KBM-7 (cell line): ENCODE measurements at regions of chr11 and their contacts with region 1.

Region 1: DNA sequence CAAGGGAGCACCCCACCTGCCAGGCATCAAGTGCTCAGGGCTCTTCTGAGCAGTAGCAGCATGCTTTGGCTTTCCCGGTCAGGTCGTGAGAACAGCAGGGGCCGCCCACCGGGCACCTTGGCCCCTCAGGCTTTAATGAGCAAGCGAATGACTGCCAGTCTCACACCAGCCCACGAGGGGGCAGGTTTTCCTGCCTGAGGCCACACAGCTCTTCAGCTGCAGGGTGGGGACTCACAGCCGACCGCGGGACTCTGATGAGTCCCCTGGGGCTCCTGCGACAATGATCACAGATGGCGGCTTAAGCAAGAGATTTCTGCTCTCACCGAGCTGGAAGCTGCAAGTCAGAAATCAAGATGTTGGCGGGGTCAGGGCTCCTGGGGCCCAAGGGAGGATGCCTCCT is 14.3 kb upstream of the FGF19 start:
- DNase-seq: peak; percentile 35

Region 2: DNA sequence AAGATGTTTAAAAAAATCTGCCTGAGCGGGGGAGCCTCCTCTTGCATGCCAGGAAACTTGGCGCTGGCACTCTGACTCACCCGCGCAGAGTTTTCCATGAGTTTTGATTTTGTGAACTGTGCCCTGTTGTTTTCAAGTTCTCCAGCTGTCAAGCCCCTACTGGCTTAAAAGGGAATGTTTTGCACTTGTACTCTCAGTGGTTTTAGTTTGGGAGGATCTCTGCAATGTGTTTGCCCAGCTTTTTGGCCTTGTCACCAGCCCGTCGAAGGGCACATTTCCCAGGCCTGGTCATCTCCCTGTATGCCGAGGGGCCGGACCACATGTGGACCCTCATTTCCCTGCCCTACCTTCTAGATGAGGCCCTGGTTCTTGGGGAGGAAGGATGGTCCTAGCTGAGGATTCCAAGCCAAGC is 717.3 kb before region 1 on chr11:
- in situ Hi-C with region 1: no loop called
- DNase-seq: peak; percentile 6

Region 3: DNA sequence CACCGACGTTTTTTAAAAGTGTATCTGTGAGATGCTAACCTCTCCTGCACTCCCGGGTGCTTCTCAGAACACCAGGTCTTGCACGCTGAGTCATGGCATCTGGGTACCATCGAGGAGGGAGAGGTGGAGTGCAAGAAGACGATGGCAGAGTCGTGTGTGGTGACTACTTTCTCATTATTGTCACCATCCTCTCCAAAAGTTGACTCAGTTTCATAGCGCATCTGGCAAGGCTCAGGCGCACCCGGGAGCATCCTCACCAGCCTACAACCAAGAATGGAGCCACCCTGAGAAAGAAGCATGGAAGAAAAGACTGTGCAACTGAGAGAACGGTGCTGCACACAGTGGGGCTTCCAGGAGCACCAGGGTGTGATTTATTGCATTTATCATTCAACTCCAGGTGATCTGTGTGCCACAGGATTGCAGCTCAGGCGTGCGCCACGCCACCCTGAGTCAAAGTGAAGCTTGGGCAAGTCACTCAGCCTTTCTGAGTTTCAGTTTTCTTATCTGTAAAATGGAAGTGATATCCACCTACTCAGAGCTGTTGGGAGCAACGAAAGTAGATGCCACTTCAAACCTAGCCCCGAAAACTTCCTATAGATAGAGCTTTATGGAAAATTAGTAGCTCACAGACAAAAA is 171.3 kb before region 1 on chr11:
- in situ Hi-C with region 1: no loop called
- DNase-seq: no peak

Region 4: DNA sequence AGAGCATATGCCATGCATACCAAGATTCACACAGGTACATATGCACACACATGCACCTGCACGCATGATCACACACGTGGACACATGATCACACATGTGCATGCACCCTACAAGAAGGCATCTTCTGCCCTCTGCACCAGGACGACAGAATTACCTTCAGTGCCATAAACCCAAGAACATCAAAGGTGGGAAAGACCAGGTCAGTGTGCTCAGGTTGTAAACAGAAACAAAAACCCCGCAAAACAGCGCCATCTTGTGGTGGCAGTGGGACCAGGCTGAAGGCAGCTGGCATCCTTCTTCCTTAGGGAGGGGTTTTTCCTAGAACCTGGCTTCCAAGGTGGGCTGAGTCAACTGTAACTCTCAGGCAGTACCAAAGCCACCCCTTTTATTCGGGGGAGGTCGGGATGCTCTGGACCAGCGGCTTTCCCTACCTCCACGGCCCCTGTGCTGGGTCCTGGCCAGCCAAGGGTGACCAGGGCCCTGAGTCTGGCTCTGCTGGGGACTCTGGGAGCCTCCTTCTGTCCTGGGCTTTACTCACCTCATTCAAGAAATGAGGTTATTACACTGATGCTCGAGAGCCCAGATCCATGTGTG is 170.4 kb after region 1 on chr11:
- in situ Hi-C with region 1: loop called (anchors 25 kb)
- DNase-seq: peak; percentile 60

Region 5: GRCh38 chr11:70191495-70192140 is 473.5 kb after region 1 on chr11:
- in situ Hi-C with region 1: loop called (anchors 25 kb)
- DNase-seq: peak; percentile 62